Aorta (tissue), 5 donors: ENCODE measurements at regions of chr12 and their contacts with region 1.

Region 1: GRCh38 chr12:21773263-21773741 is 1.2 kb downstream of the KCNJ8 start:
- DNase-seq: peak; percentile 46 to 74
- ATAC-seq: peak; percentile 10
- H3K4me3 ChIP-seq: peak overlapping the region in 1 of 2 donors; percentile 6
- H3K27ac ChIP-seq: peak overlapping the region in 1 of 2 donors; percentile 58
- H3K4me1 ChIP-seq: peaks cover 0 to 2% of the 10 kb centered on the region in 2 donors
- H3K27me3 ChIP-seq: no peaks in the 10 kb centered on the region

Region 2: DNA sequence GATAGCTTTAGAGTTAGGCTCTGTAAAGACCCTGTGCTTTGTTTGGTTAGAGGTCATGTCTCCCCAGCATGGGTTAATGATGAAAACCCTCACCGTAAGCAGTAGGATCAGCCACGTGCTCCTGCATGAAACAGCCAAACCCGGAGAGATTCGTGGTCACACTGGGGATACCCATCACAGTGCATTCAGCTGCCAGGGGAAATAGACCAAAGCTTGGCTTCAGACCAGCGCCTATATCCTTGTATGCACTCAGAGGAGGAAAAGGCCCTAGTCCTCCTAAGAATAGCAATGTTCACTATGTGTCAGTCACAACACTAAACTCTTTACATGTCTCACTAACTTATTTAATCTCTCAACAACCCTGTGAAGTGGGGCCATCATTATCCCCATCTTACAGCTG is 230.9 kb before region 1 on chr12:
- intact Hi-C with region 1: no loop called
- DNase-seq: no peak
- ATAC-seq: no peak
- H3K4me3 ChIP-seq: no peak overlapping the region
- H3K27ac ChIP-seq: no peak overlapping the region
- H3K4me1 ChIP-seq: no peaks in the 10 kb centered on the region
- H3K27me3 ChIP-seq: no peaks in the 10 kb centered on the region

Region 3: GRCh38 chr12:21725754-21726153 is 47.5 kb before region 1 on chr12:
- intact Hi-C with region 1: loop called in 1 of 2 experiments (anchors 10 kb)
- DNase-seq: no peak
- ATAC-seq: no peak
- H3K4me3 ChIP-seq: no peak overlapping the region
- H3K27ac ChIP-seq: no peak overlapping the region
- H3K4me1 ChIP-seq: no peaks in the 10 kb centered on the region
- H3K27me3 ChIP-seq: no peaks in the 10 kb centered on the region

Region 4: DNA sequence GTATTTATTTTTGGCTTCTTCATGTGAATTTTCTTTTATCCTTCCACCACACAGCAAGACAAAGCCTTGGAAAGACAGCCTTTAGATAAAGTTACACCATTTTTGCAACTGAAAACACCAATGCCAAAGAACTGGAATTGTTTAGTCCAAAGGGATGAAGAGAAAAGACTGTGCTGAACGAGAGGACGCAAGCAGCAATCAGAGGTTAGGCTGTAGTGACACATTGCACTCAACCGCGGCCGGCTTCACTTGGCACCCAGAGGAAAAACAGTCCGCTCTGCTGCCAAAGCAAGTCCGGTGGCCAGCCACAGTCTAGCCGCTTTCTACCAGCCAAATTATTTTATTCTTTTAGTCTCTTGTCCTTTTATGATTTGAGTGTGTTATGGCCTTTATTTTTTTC is 50.3 kb after region 1 on chr12:
- intact Hi-C with region 1: loop called (anchors 5 kb)
- DNase-seq: peak; percentile 81 to 87
- ATAC-seq: peak; percentile 78
- H3K4me3 ChIP-seq: no peak overlapping the region
- H3K27ac ChIP-seq: peak overlapping the region in 1 of 2 donors; percentile 22
- H3K4me1 ChIP-seq: peaks cover 4 to 8% of the 10 kb centered on the region in 2 donors
- H3K27me3 ChIP-seq: no peaks in the 10 kb centered on the region

Region 5: GRCh38 chr12:21881965-21882364 is 108.7 kb after region 1 on chr12:
- intact Hi-C with region 1: loop called in 1 of 2 experiments (anchors 10 kb)
- DNase-seq: no peak
- ATAC-seq: no peak
- H3K4me3 ChIP-seq: no peak overlapping the region
- H3K27ac ChIP-seq: no peak overlapping the region
- H3K4me1 ChIP-seq: peaks cover 0 to 3% of the 10 kb centered on the region in 2 donors
- H3K27me3 ChIP-seq: no peaks in the 10 kb centered on the region

Region 6: DNA sequence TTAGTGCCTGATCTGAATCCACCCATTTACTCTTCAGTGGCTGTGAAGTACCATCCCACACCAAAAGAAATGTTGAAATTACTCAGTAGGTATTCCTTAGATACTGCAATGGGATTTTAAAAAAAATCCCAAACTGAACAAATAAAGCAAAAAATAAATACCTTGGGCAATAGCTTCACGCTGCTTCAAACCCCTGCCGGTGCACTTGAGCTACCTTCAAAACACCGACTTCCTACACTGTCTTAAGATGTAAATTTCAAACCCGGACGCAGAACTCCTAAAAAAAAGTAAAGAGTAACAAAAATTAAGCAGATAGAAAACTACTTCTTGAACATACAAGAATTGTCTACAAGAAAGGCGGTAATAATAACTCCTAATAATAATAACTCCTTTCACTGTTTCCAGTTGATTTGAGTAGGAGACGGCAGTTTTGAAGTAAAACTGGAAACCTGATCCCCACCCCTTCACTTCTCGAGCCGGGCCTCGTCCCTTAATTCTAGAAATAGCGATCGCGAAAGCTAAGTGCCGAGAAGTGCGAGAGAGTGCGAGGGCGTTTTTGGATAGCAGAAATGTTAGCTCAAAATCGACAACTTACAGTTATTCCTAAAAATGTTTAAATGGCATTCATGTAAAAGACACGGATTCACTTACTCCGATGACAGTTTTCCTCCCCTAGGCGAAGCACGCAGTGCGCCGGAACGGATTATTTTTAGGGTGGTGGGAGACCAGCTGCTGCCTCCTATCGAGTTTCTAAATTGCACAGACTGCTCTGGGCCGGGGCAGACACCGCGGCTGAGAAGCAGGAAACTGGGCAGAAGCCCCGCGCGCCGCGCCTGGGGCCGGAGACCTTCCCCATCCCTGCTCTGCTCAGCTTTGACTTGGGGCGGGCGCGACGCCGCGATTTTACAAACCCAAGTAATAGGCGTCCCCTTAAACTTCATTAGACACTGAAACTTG is 167.5 kb after region 1 on chr12 and contains the start of gene ABCC9:
- intact Hi-C with region 1: loop called in 1 of 2 experiments (anchors 5 kb)
- DNase-seq: peak; percentile 65 to 86
- ATAC-seq: peak; percentile 90
- H3K4me3 ChIP-seq: peak within 1 kb of the TSS; percentile 43 to 76
- H3K27ac ChIP-seq: peak within 1 kb of the TSS; percentile 7 to 46
- H3K4me1 ChIP-seq: no peaks in the 10 kb centered on the region
- H3K27me3 ChIP-seq: no peaks in the 10 kb centered on the region
- total RNA-seq, gene ABCC9: 47.9 to 157 TPM